Ascending aorta (tissue), 2 donors: ENCODE measurements at regions of chr1 and their contacts with region 1.

Region 1: GRCh38 chr1:171188388-171189266 is 3.5 kb downstream of the FMO2 start:
- DNase-seq: peak in 1 of 2 donors; percentile 74
- H3K4me3 ChIP-seq: peak overlapping the region; percentile 54 to 58
- H3K27ac ChIP-seq: peak overlapping the region; percentile 74 to 83
- H3K4me1 ChIP-seq: peaks cover 1 to 6% of the 10 kb centered on the region in 2 donors
- H3K27me3 ChIP-seq: no peaks in the 10 kb centered on the region
- CTCF ChIP-seq: peak; percentile 49 to 80 (median 77)

Region 2: DNA sequence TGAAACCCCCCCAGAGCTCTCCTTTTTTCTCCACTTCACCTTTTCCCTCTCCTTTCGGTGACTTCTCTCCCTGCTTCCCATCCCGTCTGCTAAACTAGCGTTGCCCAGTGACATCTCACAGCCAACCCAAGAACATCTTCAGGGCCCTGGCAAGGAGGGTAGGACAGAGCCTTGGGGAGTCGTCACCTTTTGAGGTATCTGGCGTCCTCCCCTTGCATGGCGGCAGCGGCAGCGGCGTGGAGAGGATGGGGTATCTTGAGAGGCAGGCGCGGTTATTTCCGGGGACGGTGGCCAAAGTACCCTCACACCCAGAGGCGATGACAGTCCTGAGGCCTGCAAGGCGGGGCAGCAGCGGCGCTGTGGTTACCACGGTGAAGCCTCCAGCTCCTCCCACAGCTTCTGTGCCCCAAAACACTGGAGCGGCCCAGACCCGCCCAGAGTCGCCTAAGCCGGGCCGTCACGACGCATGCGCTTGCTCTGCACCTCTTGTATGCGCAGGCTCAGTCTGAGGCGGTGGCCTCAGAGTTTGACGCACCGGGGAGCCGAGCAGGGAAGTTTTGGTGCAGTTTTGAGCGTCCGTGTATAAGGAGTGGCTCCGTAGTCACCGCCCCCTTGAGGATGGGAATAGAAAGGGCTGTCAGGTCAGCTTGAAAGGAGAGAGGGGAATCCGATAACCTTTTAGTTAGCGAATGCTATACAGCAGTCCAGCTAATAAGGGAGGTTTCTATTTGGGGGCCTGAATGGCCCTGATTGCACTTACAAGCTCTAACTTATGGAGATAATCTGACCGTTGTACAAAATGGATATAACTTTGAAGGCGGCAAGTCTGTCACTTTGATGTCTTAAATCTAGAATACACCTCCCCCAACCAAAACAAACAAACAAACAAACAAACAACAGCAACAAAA is 1114.1 kb before region 1 on chr1 and contains the start of gene KIFAP3:
- intact Hi-C with region 1: loop called (anchors 10 kb)
- DNase-seq: peak; percentile 92 to 99
- H3K4me3 ChIP-seq: peak within 1 kb of the TSS; percentile 71 to 84
- H3K27ac ChIP-seq: peak within 1 kb of the TSS; percentile 80 to 84
- H3K4me1 ChIP-seq: peaks cover 0 to 4% of the 10 kb centered on the region in 2 donors
- H3K27me3 ChIP-seq: no peaks in the 10 kb centered on the region
- CTCF ChIP-seq: peak; percentile 23 to 55 (median 28)
- total RNA-seq, gene KIFAP3: 12.6 TPM

Region 3: DNA sequence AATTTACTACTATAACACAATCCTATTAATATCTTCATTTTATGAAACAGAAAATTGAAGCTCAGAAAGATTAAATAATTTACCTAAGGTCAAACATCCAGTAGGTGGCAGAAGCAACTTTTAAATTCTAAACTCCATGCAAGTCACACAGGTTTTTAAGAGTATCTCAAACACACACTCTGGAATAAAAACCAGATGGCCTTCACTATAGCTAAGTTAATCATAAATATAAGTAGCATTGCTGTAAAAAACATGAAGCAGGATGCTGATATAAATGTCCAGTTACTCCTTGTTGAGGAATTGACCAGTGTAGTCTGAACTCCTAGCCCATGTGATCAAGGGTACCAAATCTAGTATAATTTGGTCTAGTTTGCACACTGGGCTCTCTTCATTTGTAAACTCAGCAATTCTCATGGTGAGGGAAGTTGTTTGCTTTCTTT is 107.3 kb before region 1 on chr1:
- intact Hi-C with region 1: loop called (anchors 2 kb)
- DNase-seq: no peak
- H3K4me3 ChIP-seq: peak overlapping the region in 1 of 2 donors; percentile 24
- H3K27ac ChIP-seq: peak overlapping the region; percentile 78 to 80
- H3K4me1 ChIP-seq: peaks cover 0 to 10% of the 10 kb centered on the region in 2 donors
- H3K27me3 ChIP-seq: no peaks in the 10 kb centered on the region
- CTCF ChIP-seq: peak; percentile 41 to 56 (median 43)